PC-9 (cell line): ENCODE measurements at regions of chr4 and their contacts with region 1.

Region 1: GRCh38 chr4:188082796-188083195 is 26.6 kb downstream of the TRIML2 start:
- DNase-seq: no peak
- H3K4me3 ChIP-seq: no peak overlapping the region
- H3K27ac ChIP-seq: no peak overlapping the region
- H3K4me1 ChIP-seq: no peaks in the 10 kb centered on the region
- H3K27me3 ChIP-seq: peaks cover 7% of the 10 kb centered on the region; the same call in 1 of the 2 replicates
- CTCF ChIP-seq: no peak

Region 2: DNA sequence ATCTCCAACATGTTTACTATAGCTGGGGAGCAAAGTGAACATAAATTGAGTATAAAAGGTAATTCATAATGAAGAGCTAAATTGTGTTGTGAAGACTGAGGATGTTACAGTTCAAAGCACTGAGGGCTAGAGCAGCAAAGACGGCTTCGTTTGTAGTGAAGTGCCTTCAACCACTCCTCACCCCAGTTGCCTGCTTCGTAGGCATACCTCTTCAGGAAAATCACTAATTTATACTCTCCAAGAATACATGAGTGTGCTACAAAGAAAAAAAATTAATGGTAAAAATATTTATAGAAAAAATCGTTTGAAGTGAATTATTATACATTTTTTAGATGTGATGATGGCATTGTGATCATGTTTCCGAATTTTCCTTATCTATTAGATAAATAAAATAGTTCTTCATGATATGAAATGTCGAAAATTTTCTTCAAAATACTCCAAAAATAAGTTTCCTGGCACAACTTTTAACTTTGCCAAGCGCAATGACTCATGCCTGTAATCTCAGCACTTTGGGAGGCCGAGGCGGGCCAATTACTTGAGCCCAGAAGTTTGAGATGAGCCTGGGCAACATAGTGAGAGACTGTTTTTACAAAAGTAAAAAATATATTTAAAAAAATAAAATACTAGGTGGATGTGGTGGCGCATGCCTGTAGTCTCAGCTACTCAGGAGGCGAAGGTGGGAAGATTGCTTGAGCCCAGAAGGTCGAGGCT is 45.6 kb before region 1 on chr4:
- CTCF ChIA-PET with region 1: no interaction called
- POLR2A ChIA-PET with region 1: interaction called, 13 read pairs
- intact Hi-C with region 1: no loop called
- DNase-seq: no peak
- H3K4me3 ChIP-seq: no peak overlapping the region
- H3K27ac ChIP-seq: no peak overlapping the region
- H3K4me1 ChIP-seq: no peaks in the 10 kb centered on the region
- H3K27me3 ChIP-seq: no peaks in the 10 kb centered on the region
- CTCF ChIP-seq: no peak